Naive thymus-derived CD8-positive, alpha-beta T cell (primary cell): ENCODE measurements at regions of chr5 and their contacts with region 1.

Region 1: GRCh38 chr5:10353241-10354047 is at the start of gene MARCHF6:
- DNase-seq: peak; percentile 91 to 98 (median 95)
- ATAC-seq: peak; percentile 83 to 87
- H3K4me3 Mint-ChIP-seq: peak within 1 kb of the TSS; percentile 92 to 99 (median 98)
- H3K27ac Mint-ChIP-seq: peak within 1 kb of the TSS; percentile 93 to 99 (median 99)
- H3K4me1 Mint-ChIP-seq: peaks cover 19 to 52% (median 43%) of the 10 kb centered on the region in 4 donors
- H3K27me3 Mint-ChIP-seq: no peaks in the 10 kb centered on the region
- polyA plus RNA-seq, gene MARCHF6: 31.5 to 44.0 (median 38.0) TPM

Region 2: DNA sequence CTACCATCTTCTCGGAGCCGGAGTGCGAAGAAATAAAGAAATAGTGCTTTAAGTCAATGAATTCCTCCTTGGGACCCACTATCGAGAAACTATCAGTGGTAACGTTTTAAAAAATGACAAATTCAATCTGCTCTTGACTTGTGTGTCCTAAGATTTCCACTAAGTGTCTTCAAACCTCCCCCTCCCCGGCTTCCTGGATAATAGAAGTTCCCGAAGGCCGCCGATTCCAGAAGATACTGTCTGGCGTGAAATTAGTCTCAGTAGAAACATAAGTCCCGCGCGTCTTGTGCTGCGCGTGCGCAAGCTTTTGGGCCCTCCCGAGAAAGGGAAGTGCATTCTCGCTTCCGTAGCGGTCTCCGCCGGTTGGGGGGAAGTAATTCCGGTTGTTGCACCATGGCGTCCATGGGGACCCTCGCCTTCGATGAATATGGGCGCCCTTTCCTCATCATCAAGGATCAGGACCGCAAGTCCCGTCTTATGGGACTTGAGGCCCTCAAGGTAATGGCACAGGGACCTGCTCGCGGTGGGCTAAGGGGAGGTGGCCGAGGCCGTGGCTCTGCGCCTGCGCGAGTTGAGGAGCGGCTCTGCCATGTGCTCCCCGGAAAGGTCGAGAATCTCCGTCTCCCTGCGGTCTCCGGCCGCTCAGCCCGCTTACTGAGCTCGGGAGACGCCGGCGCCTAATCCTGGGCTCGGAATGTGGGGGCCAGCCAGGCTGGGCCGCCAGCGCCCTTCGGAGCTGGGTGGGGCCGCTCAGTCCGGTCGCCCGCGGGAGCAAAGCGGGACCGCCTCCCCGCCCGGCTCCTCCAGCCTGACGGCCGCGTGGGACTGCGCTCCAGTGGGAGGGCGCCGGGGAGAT is 103.3 kb before region 1 on chr5 and contains the start of gene CCT5:
- POLR2A ChIA-PET with region 1: interaction called, 30 read pairs
- DNase-seq: peak; percentile 81 to 97 (median 90)
- ATAC-seq: peak; percentile 74 to 78
- H3K4me3 Mint-ChIP-seq: peak within 1 kb of the TSS; percentile 82 to 96 (median 92)
- H3K27ac Mint-ChIP-seq: peak within 1 kb of the TSS; percentile 97 to 100 (median 99)
- H3K4me1 Mint-ChIP-seq: peaks cover 24 to 63% (median 58%) of the 10 kb centered on the region in 4 donors
- H3K27me3 Mint-ChIP-seq: no peaks in the 10 kb centered on the region
- polyA plus RNA-seq, gene CCT5: 195 to 216 (median 196) TPM

Region 3: DNA sequence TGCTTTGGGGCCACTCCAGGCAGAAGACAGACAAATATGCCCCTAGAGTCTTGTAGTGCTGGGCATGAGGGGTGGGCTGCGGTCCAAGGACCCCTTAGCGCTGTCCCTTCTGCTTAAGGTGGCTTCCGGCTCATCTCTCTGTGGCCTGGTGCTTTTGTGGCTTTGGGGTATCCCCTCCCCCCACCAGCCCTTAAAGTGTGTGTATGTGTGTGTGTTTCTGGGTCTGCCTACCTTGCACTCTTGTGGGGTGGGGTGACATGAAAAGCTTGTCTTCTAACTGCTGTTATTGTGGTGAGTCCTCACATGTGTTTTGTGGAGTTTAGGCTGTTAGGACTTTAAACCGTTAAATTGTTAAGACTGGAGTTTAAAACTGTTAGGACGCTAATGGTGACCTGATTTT is 23.6 kb after region 1 on chr5:
- POLR2A ChIA-PET with region 1: interaction called, 18 read pairs
- DNase-seq: peak in 5 of 10 donors; percentile 18 to 50 (median 33)
- ATAC-seq: peak; percentile 77 to 78
- H3K4me3 Mint-ChIP-seq: peak overlapping the region; percentile 34 to 81 (median 66)
- H3K27ac Mint-ChIP-seq: peak overlapping the region in 8 of 10 donors; percentile 1 to 90 (median 55)
- H3K4me1 Mint-ChIP-seq: peaks cover 34 to 68% (median 62%) of the 10 kb centered on the region in 4 donors
- H3K27me3 Mint-ChIP-seq: no peaks in the 10 kb centered on the region

Region 4: DNA sequence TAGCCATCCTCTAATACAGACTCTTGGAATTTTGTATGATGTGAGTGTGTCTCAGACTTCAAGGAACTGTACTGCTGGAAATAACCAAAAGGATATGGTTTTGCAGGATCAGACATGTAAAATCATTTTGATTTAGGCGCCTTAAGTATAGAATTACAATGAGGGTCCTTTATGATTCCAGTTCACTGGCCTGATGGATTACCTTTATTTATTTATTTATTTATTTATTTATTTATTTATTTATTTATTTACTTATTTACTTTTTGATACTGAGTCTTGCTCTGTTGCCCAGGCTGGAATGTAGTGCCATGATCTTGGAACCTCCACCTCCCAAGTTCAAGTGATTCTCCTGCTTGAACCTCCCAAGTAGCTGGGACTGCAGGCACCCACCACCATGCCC is 50.4 kb after region 1 on chr5:
- POLR2A ChIA-PET with region 1: no interaction called
- DNase-seq: no peak
- ATAC-seq: no peak
- H3K4me3 Mint-ChIP-seq: no peak overlapping the region
- H3K27ac Mint-ChIP-seq: no peak overlapping the region
- H3K4me1 Mint-ChIP-seq: peaks cover 0 to 2% (median under 1%) of the 10 kb centered on the region in 4 donors
- H3K27me3 Mint-ChIP-seq: no peaks in the 10 kb centered on the region

Region 5: GRCh38 chr5:10503997-10504793 is 150.8 kb after region 1 on chr5:
- POLR2A ChIA-PET with region 1: no interaction called
- DNase-seq: no peak
- ATAC-seq: no peak
- H3K4me3 Mint-ChIP-seq: no peak overlapping the region
- H3K27ac Mint-ChIP-seq: no peak overlapping the region
- H3K4me1 Mint-ChIP-seq: peaks cover 0 to 10% (median under 1%) of the 10 kb centered on the region in 4 donors
- H3K27me3 Mint-ChIP-seq: peaks cover 0 to 8% (median 2%) of the 10 kb centered on the region in 5 donors